ENCODE measurements at regions of chr19 and their contacts with region 1.

Region 1: DNA sequence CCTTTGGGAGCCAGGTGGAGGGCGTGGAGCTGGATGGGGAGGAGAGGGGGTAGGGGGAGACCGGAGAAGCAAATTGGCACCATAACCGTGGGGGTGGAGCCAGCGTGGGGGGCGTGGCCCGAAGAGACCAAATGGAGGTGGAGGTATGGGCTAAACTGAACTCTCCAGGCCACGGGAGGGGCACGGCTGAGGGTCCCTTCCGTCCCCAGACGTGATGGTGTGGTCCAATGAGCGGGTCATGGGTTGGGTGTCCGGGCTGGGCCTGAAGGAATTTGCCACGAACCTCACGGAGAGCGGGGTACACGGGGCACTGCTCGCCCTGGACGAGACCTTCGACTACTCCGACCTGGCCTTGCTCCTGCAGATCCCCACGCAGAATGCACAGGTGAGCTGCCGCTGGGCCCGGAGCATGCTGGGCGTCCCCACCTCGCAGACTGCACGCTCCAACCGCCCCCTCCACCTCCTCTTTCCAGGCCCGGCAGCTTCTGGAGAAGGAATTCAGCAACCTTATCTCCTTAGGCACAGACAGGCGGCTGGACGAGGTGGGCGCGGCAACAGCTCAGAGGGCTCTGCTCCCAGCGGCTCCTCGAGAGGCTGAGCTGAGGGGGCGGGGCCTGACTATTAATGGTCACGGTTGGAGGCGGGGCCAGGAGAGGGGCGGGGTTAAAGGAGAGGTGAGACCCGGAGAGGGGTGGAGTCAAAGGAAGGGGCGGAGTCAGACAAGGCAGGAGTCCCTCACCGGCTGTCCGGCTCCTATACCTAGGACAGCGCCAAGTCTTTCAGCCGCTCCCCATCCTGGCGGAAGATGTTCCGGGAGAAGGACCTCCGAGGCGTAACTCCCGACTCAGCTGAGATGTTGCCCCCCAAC is 6.2 kb downstream of the HRC start:
- DNase-seq: peak; percentile 96 to 98
- ATAC-seq: peak; percentile 32 to 71
- H3K4me3 ChIP-seq: peak overlapping the region; percentile 68
- H3K27ac ChIP-seq: peak overlapping the region; percentile 76 to 83
- H3K4me1 ChIP-seq: peaks cover 31% of the 10 kb centered on the region
- CTCF ChIP-seq: no peak
- EP300 ChIP-seq: no peak
- POLR2A ChIP-seq: peak; percentile 33; the same call in 1 of the 2 replicates
- RAD21 ChIP-seq: no peak

Region 2: DNA sequence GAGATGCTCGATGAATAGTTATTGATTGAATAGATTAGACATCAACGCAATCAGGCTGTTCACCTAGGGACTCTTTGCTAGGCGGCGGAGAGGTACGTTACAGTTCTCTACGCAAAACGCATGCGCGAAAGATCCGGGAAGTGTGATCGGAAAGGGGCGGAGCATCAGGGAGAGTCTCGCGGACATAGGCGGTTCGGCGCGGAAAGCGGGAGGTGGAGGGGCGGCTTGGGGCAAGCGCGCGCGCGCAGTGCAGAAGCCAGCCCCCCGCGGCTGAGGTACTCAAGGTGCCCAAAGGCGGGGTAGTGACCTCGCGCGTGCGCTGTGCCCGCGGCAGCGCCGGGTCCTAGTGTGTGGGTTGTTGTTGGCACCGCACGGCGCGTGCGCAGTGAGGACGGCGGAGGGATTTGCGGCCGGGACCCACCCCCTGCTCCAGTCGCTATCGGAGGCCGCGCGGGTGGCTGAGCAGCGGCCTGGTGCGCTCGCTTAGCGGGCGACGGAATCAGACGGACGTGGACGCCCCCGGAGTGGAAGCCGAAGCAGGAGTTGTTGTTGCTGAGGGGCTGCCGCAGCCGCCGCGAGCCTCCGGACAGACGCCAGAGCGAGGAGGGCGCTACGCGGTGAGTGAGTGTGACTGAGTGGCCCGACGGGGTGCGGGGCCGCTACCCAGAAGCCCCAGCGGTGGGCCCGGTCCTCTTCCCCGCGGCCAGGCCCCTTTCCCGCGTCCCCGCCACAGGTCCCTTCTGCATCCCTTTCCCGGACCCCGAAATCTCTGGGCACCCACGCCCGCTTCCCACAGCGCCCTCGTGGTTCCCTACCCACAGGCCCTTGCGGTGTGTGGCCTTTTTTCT is 63.8 kb before region 1 on chr19 and contains the start of gene SNRNP70:
- CTCF ChIA-PET with region 1: interaction called, 14 read pairs
- POLR2A ChIA-PET with region 1: no interaction called
- DNase-seq: peak; percentile 100
- ATAC-seq: peak; percentile 94 to 95
- H3K4me3 ChIP-seq: peak within 1 kb of the TSS; percentile 73
- H3K27ac ChIP-seq: peak within 1 kb of the TSS; percentile 88 to 91
- H3K4me1 ChIP-seq: peaks cover 20% of the 10 kb centered on the region
- CTCF ChIP-seq: no peak
- EP300 ChIP-seq: no peak
- POLR2A ChIP-seq: peak; percentile 94
- RAD21 ChIP-seq: no peak
- polyA plus RNA-seq, gene SNRNP70: 214 and 220 TPM in 2 replicates

Region 3: GRCh38 chr19:49106648-49107135 is 42.3 kb before region 1 on chr19:
- CTCF ChIA-PET with region 1: interaction called, 52 read pairs
- POLR2A ChIA-PET with region 1: no interaction called
- DNase-seq: peak; percentile 69 to 87
- ATAC-seq: peak; percentile 63 to 80
- H3K4me3 ChIP-seq: no peak overlapping the region
- H3K27ac ChIP-seq: peak overlapping the region in 1 of 2 experiments; percentile 51; a peak in 4 of 6 replicates
- H3K4me1 ChIP-seq: peaks cover 18% of the 10 kb centered on the region
- CTCF ChIP-seq: peak; percentile 93
- EP300 ChIP-seq: no peak
- POLR2A ChIP-seq: no peak
- RAD21 ChIP-seq: peak; percentile 40 to 45; a peak in 4 of 5 replicates

Region 4: DNA sequence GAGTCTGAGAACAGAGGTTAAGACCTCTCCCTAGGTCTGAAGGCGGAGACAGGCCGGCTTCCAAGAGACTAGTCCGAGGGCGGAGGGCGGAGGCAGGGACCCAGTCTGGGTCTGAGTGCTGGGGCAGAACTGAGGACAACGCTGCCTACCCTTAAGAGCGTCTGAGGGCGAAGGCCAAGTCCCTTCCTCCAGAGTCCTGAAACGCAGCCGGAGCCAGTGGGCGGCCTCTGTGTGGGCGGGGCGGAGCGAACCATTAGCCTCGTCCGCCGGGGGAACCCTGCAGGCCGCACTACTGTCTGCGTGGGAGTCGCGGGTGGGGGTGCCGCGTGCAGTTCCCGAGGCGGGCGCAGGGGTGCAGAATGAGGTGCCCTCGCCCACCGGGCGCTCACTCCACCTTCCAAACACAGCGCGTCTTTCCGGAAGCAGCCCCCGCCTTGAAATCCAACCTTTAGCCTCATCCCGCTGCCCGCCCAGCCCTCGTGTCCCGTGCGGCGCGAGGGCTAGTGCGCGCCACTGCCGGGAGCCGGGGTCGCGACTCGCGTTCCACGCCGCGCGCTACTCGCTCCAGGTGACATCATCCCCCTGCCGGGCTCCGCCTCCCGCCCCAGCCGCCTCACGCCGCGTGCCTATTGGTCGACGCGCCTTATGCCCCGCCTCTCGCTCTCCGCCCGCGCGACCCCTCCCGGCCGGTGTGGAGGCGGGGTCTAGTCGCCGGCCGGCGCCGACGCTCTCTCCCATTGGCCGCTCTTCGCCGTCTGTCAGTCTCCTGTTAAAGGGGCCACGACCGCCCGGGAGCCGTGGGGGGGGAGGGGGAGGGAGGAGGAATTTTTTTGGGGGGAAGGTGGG is 30.2 kb before region 1 on chr19 and contains the start of gene C19orf73:
- CTCF ChIA-PET with region 1: interaction called, 298 read pairs
- POLR2A ChIA-PET with region 1: interaction called, 5 read pairs
- DNase-seq: peak; percentile 94 to 98
- ATAC-seq: peak; percentile 65 to 87
- H3K4me3 ChIP-seq: peak within 1 kb of the TSS; percentile 62
- H3K27ac ChIP-seq: peak within 1 kb of the TSS; percentile 95
- H3K4me1 ChIP-seq: peaks cover 20% of the 10 kb centered on the region
- CTCF ChIP-seq: no peak
- EP300 ChIP-seq: no peak
- POLR2A ChIP-seq: peak; percentile 64
- RAD21 ChIP-seq: no peak
- polyA plus RNA-seq, gene C19orf73: 1.4 and 1.8 TPM in 2 replicates

Region 5: DNA sequence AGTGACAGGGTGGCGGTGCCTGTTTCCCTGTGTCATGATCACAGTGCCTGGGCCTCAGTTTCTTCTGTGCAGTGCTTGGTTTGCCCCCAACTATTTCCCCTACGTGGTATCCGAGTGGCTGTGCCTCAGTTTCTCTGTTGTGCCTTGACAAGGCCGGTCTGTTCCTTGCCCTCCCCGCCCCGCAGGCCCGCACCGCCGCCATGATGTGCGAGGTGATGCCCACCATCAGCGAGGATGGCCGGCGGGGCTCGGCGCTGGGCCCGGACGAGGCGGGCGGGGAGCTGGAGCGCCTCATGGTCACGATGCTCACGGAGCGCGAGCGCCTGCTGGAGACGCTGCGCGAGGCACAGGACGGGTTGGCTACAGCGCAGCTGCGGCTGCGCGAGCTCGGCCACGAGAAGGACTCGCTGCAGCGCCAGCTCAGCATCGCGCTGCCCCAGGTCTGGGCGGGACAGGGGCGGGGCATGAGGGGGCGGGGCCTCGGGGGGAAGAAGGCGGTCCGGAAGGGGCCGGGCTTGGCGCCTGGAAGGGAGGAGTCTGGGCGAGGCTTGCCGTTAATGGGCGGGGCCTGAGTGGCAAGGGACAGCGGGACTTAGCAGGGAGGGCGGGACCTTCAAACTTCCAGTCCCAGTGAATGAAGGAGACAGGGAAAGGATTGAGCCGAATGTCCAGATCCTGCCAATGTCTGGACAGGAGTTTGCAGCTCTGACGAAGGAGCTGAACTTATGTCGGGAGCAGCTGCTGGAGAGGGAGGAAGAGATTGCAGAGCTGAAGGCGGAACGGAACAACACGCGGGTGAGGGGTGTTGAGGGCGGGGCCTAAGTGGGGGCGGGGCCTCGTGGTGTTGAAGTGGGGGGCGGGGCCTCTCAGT is 21.1 kb before region 1 on chr19:
- CTCF ChIA-PET with region 1: interaction called, 298 read pairs
- POLR2A ChIA-PET with region 1: interaction called, 14 read pairs
- DNase-seq: peak; percentile 99
- ATAC-seq: peak; percentile 89 to 97
- H3K4me3 ChIP-seq: peak overlapping the region; percentile 40
- H3K27ac ChIP-seq: peak overlapping the region; percentile 62 to 80
- H3K4me1 ChIP-seq: peaks cover 9% of the 10 kb centered on the region; the same call in 2 of the 3 replicates
- CTCF ChIP-seq: 0 out of 3 replicates have a peak, but pooled peaks have one; percentile 13
- EP300 ChIP-seq: no peak
- POLR2A ChIP-seq: peak; percentile 82
- RAD21 ChIP-seq: no peak

Measured in A549 (cell line).